Panc1 (cell line): ENCODE measurements at regions of chr12 and their contacts with region 1.

Region 1: DNA sequence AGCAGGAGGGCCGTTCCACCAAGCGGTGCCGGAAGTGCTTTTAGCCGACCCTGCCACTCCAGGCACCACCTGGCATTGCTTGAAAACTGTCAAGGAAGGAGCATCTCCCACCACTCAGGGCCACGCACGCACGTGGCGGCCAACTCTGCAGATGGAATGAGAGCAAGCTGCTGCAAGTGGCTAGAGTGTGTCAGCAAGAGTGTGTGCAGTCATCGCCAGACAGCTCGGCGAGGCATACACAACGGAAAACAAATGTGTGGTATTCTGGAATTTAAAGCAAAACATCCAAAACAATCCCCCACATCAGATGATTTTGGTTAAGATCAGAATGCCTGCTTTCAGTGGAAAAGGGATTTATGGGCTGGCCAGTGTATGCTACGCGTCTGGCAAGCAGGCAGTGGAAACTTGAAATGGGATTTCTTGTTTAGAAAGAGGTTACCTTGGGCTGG is 11.2 kb downstream of the CD9 start:
- DNase-seq: no peak
- ATAC-seq: no peak
- H3K4me3 ChIP-seq: no peak overlapping the region
- H3K27ac ChIP-seq: no peak overlapping the region
- H3K4me1 ChIP-seq: peaks cover 27% of the 10 kb centered on the region
- H3K27me3 ChIP-seq: no peaks in the 10 kb centered on the region
- CTCF ChIP-seq: no peak

Region 2: DNA sequence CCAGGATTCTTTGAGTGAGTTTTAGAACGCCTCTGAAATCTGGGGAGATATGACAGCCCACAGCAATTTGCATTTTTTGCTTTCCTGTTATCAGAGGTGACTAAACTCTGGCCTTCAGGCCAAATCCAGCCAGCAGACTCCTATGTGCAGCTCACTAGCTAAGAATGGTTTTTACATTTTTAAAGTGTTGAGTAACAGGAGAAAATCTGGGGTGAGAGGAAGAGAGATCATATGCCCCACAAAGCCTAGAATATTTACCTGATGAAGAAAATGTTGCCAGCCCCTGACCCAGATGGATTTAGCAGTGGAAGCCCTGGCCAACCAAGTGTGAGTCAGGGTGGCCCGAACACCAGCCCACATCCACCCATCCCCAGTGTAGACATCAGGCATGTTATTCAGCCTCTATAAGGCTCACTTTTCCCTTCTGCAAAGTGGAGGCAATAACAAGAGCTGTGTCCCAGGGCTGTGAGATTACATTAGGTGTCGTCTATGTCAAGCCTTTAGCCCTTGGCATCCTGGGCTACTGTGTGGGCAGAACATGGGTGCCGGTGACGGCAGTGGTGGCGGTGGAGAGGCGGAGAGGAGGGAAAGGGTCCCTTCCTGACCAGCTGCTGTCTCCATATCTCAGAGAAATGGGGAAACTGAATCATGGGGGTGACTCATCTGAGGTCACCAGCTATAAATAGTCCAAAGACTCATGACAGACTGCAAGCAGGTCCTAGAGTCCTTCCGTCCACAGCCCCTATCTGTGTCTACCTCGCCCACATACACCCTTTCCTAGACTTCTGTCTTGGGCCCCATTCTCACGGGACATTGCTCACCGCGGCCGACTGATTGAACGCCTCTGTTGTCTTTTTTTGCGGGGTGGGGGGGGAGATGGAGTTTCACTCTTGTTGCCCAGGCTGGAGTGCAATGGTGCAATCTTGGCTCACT is 43.9 kb before region 1 on chr12:
- CTCF ChIA-PET with region 1: no interaction called
- POLR2A ChIA-PET with region 1: no interaction called
- in situ Hi-C with region 1: no loop called
- intact Hi-C with region 1: no loop called
- DNase-seq: peak; percentile 94
- ATAC-seq: peak; percentile 93
- H3K4me3 ChIP-seq: no peak overlapping the region
- H3K27ac ChIP-seq: 0 out of 2 replicates have a peak overlapping the region, but pooled peaks have one; percentile 7
- H3K4me1 ChIP-seq: peaks cover 6% of the 10 kb centered on the region
- H3K27me3 ChIP-seq: no peaks in the 10 kb centered on the region
- CTCF ChIP-seq: no peak

Region 3: DNA sequence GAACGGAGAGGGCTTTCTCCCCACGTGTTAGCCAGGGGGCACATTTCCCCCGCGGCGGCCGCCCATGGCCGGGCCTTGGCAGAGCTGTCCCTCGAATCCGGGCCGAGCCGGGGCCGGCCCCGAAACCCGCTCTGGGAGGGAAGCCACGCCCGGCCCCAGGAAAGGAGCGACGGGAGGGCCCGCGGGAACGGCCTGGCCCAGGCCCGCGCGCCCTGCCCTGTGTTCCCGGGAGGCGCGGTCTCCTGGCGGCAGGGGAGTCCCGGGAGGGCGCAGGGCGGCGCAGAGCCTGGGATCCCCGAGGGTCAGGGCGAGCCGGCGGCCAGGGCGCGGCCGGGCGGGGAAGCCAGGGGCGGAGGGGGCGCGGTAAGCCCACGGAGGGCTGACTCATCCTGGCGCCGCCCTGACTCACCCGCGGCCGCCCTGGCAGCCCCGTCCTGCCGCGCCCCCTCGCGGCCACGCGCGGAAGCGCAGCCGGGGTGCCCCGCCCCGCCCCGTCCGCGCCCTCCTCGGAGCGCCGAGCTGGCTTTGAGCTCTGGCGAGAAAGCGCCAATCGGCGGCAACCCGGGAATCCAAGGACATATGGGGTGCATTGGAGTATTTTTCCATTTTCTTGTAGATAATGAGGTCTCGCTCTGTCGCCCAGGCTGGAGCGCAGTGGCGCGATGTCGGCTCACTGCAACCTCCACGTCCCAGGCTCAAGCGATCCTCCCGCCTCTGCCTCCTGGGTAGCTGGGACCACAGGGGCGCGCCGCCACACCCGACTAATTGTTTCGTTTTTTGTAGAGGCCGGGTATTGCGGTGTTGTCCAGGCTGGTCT is 67.2 kb after region 1 on chr12:
- CTCF ChIA-PET with region 1: interaction called, 11 read pairs
- POLR2A ChIA-PET with region 1: no interaction called
- in situ Hi-C with region 1: no loop called
- intact Hi-C with region 1: no loop called
- DNase-seq: no peak
- ATAC-seq: peak; percentile 88
- H3K4me3 ChIP-seq: peak overlapping the region; percentile 50 to 55
- H3K27ac ChIP-seq: peak overlapping the region; percentile 84
- H3K4me1 ChIP-seq: peaks cover 21% of the 10 kb centered on the region
- H3K27me3 ChIP-seq: no peaks in the 10 kb centered on the region
- CTCF ChIP-seq: peak; percentile 96

Region 4: DNA sequence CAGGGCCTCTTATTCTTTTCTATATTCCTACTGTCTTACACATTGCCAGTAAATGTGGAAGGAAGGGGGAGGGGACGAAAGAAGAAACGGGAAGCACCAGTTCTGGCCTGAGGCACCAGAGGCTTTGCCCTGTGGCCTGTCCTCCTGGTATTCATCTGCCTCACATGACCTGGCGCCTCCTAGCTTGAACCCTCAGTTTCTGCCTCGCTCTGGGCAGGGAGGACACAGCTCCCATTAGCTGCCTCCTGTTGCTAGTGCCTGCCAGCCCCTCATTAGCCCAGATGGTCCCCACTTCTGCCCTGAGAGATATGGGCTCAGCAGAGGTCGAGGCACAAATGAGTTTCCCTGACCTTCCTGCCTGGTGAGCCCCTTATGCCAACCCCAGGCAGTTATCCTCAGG is 96.1 kb after region 1 on chr12:
- CTCF ChIA-PET with region 1: no interaction called
- POLR2A ChIA-PET with region 1: no interaction called
- in situ Hi-C with region 1: no loop called
- intact Hi-C with region 1: no loop called
- DNase-seq: no peak
- ATAC-seq: no peak
- H3K4me3 ChIP-seq: no peak overlapping the region
- H3K27ac ChIP-seq: no peak overlapping the region
- H3K4me1 ChIP-seq: no peaks in the 10 kb centered on the region
- H3K27me3 ChIP-seq: no peaks in the 10 kb centered on the region
- CTCF ChIP-seq: no peak